Transverse colon (tissue), 4 donors: ENCODE measurements at regions of chr3 and their contacts with region 1.

Region 1: DNA sequence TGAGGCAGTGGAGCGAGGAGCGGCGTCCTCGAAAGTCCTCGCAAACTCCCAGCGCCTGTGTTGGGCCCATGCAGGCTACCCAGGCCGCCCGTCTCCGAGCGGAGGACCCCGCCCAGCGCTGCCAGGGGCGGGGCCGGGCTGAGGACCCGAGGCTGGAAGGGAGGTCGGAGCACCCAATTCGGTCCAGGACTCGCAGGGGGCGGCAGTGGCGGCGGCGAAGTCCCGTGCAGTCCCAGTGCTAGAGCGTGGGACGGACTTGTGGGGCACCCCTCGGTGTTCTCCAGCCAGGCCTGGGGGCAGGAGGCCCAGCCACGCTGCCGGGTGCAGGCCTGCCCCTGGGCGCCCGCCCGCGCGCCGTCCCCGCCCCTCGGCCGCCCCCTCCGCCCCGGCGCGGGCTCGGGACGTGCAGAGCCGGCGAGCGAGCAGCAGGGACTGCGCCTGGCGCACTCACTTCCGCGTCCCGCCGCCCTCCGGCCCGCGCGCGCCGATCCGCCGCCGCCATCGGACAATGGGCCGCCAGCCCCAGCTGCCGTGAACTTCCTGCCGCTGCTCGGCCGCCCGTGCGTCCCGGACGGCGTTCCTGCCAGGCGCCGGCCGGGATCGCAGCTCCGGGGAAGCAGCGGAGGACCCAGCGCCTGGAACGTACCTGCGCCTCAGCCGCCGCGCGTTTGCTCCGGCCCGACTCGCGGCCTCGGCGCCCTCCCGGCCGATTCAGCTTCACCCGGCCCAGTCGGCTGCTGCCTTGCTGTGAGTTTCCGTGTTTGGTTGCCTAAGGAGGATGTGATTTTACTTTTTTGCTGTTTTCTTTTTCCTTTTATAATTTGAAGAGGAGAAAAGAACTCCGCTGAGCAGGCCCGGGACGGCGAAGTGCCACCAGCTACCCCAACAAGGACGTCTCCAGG is 592 bp upstream of the LIMD1 start:
- DNase-seq: peak; percentile 81
- H3K4me3 ChIP-seq: peak overlapping the region; percentile 54 to 83 (median 80)
- H3K27ac ChIP-seq: peak overlapping the region; percentile 93 to 97 (median 96)
- H3K4me1 ChIP-seq: peaks cover 30 to 58% (median 52%) of the 10 kb centered on the region in 4 donors
- H3K27me3 ChIP-seq: no peaks in the 10 kb centered on the region
- CTCF ChIP-seq: no peak
- EP300 ChIP-seq: no peak
- POLR2A ChIP-seq: peak; percentile 48

Region 2: DNA sequence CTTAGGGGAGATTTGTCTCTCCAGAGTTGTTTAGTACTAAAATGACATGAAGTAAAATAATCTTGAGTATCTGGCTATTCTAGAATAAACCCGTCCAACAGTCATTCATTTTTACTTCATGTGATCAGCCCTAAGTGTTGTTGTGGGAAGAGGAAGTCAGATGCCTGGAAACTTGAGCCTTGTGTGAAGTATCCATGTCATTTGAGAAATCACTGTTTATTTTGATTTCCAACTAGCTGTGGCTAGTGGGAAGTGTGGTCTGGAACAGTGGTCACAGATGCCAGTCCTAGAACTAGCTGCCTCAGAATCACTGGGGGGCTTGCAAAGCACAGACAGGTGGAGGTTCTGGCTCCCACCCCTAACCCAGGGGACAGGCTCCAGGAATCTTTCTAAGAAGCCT is 77.1 kb before region 1 on chr3:
- in situ Hi-C with region 1: no loop called
- intact Hi-C with region 1: loop called (anchors 5 kb)
- DNase-seq: no peak
- H3K4me3 ChIP-seq: no peak overlapping the region
- H3K27ac ChIP-seq: no peak overlapping the region
- H3K4me1 ChIP-seq: no peaks in the 10 kb centered on the region
- H3K27me3 ChIP-seq: no peaks in the 10 kb centered on the region
- CTCF ChIP-seq: no peak
- EP300 ChIP-seq: no peak
- POLR2A ChIP-seq: no peak